Activated CD8-positive, alpha-beta memory T cell treated with anti-CD3 and anti-CD28 coated beads, Interleukin-2, amount 10 ng/mL, durations not matched to agents 7 days and 5 days (primary cell): ENCODE measurements at regions of chr3 and their contacts with region 1.

Region 1: DNA sequence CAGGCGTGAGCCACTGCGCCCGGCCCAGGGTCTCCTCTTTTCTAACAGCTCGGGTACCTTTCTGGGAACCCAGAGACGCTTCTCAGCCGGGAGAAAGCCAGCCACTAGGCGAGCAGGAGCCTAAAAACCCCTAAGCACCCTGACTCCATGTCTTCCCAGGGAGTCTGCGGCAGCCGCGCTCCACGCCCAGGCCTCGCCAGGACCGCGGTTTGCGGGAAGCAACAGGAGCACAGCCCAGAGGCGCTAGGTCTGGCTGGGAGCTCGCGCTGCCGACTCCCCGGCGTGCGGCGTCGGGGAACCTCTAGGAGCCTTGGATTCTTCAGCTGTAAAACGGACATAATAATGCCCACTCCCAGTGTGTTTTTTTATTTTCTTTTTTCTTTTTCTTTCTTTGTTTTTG is 1.0 kb upstream of the LAMP3 start:
- DNase-seq: no peak
- ATAC-seq: no peak
- H3K4me3 Mint-ChIP-seq: peak overlapping the region; percentile 96
- H3K27ac Mint-ChIP-seq: no peak overlapping the region
- H3K4me1 Mint-ChIP-seq: peaks cover 33% of the 10 kb centered on the region
- H3K27me3 Mint-ChIP-seq: peaks cover 7% of the 10 kb centered on the region

Region 2: GRCh38 chr3:183178629-183179549 is 15.3 kb after region 1 on chr3:
- CTCF ChIA-PET with region 1: interaction called, 14 read pairs
- DNase-seq: peak; percentile 68
- ATAC-seq: peak; percentile 80
- H3K4me3 Mint-ChIP-seq: peak overlapping the region; percentile 70
- H3K27ac Mint-ChIP-seq: no peak overlapping the region
- H3K4me1 Mint-ChIP-seq: peaks cover 11% of the 10 kb centered on the region
- H3K27me3 Mint-ChIP-seq: peaks cover 29% of the 10 kb centered on the region

Region 3: DNA sequence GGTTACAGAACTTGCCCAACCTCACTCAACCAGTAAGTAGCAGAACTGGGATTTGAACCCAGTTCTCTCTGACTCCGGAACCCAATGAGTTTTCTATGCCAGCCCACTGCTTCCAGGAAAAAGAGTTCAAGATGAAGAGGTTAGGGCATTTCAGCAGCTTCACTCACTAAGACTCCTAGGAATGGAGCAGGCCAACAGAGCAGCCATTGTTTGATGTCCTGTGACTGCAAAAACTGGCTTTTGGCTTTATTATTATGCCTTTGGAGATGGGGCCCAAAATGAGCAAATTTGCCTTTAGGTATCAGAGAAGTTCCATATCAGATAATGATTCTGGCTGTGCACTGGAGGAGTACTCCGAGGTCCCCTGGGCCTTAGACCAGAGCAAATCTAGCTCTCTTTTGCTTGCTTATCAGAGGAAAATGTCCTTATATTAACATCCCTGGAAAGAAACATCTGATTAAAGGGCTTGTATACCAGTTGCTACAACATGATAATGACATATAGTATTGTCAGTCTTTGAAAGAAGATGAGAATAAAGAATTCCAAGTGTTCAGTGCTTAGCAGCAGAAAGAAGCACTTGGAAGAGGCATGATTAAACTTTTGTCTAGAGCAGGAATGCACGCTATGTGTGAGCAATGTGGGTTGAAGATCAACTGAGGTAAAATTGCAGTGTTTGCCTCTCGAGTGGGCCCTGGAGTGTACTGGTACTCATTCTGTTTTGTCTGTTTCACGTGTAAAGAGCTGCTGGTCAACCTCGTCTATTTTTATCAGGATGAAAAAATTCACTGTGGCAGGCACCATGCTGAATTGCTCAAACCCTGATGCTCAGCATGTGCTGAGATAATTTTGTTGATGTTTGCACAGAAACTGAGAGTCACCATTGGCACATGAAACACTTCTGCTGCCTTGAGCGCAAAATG is 450.1 kb after region 1 on chr3:
- CTCF ChIA-PET with region 1: no interaction called
- DNase-seq: no peak
- ATAC-seq: no peak
- H3K4me3 Mint-ChIP-seq: no peak overlapping the region
- H3K27ac Mint-ChIP-seq: no peak overlapping the region
- H3K4me1 Mint-ChIP-seq: no peaks in the 10 kb centered on the region
- H3K27me3 Mint-ChIP-seq: peaks cover 4% of the 10 kb centered on the region